ENCODE measurements at regions of chr6 and their contacts with region 1.

Region 1: GRCh38 chr6:142387997-142388815 is 86.4 kb downstream of the ADGRG6 start:
- DNase-seq: peak; percentile 67 to 79 (median 74)
- H3K4me3 ChIP-seq: no peak overlapping the region
- H3K27ac ChIP-seq: no peak overlapping the region
- H3K4me1 ChIP-seq: peaks cover 0 to 48% (median 9%) of the 10 kb centered on the region in 4 experiments
- H3K27me3 ChIP-seq: no peaks in the 10 kb centered on the region

Region 2: DNA sequence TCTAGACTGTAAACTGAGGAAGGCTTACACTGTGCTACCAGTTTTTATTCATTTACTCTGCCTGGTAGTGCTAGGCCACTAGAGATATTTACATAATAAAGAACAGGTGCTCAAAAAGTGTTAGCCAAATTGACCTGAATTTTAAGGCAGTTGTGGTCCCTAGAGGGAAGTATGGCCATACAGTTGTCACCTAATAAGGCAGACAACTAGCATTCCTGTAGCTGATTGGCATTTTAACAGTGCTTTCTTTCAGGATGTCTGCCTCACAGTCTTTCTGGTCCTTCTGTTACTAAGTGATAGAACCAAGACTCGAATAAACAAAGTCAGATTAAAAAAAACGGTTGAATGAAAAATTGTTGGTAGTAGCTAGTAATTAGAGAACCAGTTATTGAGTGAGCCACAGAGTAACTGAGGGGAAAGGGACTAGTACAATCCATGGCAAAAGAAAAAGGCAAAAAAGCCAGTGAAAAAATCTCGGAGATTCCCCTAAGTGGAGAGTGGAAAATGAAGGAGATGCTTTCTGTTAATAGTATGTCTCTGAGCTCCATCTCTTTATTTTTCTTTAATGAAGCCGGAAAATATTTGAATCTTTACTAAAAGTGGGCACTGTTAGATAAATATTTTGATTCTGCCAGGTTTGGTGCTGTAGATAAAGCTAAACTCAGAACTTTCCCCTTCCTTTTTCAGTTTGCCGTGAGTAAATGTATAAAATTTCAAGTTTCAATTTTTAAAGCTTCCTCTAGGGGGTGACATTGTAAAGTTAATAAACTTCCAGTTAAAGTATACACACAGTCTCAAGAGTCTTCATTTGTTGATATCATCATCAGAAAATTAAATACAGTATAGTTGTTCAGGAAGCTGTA is 232.1 kb before region 1 on chr6:
- CTCF ChIA-PET with region 1: interaction called, 61 read pairs
- POLR2A ChIA-PET with region 1: interaction called, 5 read pairs
- DNase-seq: peak; percentile 45 to 70 (median 64)
- H3K4me3 ChIP-seq: peak overlapping the region in 3 of 7 experiments; percentile 25 to 54 (median 42)
- H3K27ac ChIP-seq: peak overlapping the region; percentile 40 to 56
- H3K4me1 ChIP-seq: peaks cover 0 to 13% (median 3%) of the 10 kb centered on the region in 4 experiments
- H3K27me3 ChIP-seq: no peaks in the 10 kb centered on the region

Region 3: GRCh38 chr6:142236691-142237090 is 151.5 kb before region 1 on chr6:
- CTCF ChIA-PET with region 1: interaction called, 43 read pairs
- POLR2A ChIA-PET with region 1: no interaction called
- DNase-seq: no peak
- H3K4me3 ChIP-seq: no peak overlapping the region
- H3K27ac ChIP-seq: no peak overlapping the region
- H3K4me1 ChIP-seq: peaks cover 0 to 10% (median 4%) of the 10 kb centered on the region in 4 experiments
- H3K27me3 ChIP-seq: no peaks in the 10 kb centered on the region

Region 4: GRCh38 chr6:142356201-142356883 is 31.9 kb before region 1 on chr6:
- CTCF ChIA-PET with region 1: interaction called, 10 read pairs
- POLR2A ChIA-PET with region 1: no interaction called
- DNase-seq: peak in 2 of 3 donors; percentile 47 to 63
- H3K4me3 ChIP-seq: peak overlapping the region in 4 of 7 experiments; percentile 17 to 61 (median 48)
- H3K27ac ChIP-seq: no peak overlapping the region
- H3K4me1 ChIP-seq: peaks cover 6 to 43% (median 13%) of the 10 kb centered on the region in 4 experiments
- H3K27me3 ChIP-seq: no peaks in the 10 kb centered on the region

Region 5: GRCh38 chr6:142404751-142405150 is 16.5 kb after region 1 on chr6:
- CTCF ChIA-PET with region 1: interaction called, 11 read pairs
- POLR2A ChIA-PET with region 1: no interaction called
- DNase-seq: no peak
- H3K4me3 ChIP-seq: no peak overlapping the region
- H3K27ac ChIP-seq: no peak overlapping the region
- H3K4me1 ChIP-seq: peaks cover 0 to 4% (median 0%) of the 10 kb centered on the region in 4 experiments
- H3K27me3 ChIP-seq: no peaks in the 10 kb centered on the region

Measured in common myeloid progenitor, CD34-positive (primary cell).